Breast epithelium (tissue), 4 donors: ENCODE measurements at regions of chr2 and their contacts with region 1.

Region 1: DNA sequence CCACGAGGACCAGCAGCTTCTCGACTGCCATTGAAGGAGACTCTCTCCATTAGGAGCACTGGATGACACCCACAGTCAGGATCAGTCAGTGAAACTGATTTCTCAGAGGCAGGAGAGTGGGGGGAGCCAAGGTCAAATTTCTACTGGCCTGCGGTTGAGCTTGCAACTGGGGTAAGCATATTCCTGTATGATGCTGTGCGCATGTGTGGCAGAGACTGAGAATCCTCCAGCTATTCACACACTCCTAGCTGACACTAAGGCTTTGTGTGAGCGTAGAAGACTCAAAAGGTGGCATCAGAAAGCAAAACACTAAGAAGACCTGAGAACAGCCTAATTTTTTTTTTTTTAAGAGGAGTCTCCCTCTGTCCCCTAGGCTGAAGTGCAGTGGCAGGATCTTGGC is 19.8 kb upstream of the TTL start:
- DNase-seq: no peak
- H3K4me3 ChIP-seq: no peak overlapping the region
- H3K27ac ChIP-seq: no peak overlapping the region
- H3K4me1 ChIP-seq: no peaks in the 10 kb centered on the region
- H3K27me3 ChIP-seq: no peaks in the 10 kb centered on the region
- CTCF ChIP-seq: no peak
- POLR2A ChIP-seq: no peak

Region 2: DNA sequence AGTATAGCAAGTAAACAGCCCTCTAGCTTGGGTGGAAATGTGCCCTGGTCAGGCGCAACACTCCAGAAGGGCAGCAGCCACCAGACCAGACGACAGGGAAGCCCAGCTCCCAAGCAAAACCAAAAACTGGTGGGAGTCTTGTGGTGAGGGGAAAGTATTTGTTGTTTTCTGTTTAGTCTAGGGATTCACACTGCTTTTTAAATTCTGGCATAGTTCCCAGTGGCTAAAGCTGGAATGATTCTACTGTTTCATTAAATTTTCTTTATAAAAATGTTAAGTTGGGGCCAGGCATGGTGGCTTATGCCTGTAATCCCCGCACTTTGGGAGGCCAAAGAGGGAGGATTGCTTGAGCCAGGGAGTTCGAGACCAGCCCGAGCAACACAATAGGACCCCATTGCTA is 525.3 kb before region 1 on chr2:
- intact Hi-C with region 1: loop called (anchors 5 kb)
- DNase-seq: no peak
- H3K4me3 ChIP-seq: no peak overlapping the region
- H3K27ac ChIP-seq: no peak overlapping the region
- H3K4me1 ChIP-seq: no peaks in the 10 kb centered on the region
- H3K27me3 ChIP-seq: no peaks in the 10 kb centered on the region
- CTCF ChIP-seq: no peak
- POLR2A ChIP-seq: no peak

Region 3: DNA sequence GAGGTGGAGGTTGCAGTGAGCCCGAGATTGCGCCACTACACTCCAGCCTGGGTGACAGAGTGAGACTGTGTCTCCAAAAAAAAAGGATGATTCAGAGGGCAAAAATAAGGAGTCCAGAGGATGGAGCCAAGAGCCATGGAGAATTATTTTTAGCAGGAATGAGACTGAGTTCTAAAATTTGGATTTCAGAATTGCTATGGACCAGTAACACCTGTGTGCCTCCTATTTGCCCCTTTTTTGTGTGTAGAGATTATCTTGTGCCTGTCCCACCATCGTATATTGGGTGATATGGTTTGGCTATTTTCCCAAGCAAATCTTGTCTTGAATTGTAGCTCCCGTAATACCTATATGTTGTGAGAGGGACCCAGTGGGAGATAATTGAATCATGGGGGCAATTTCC is 12.3 kb before region 1 on chr2:
- intact Hi-C with region 1: no loop called
- DNase-seq: no peak
- H3K4me3 ChIP-seq: no peak overlapping the region
- H3K27ac ChIP-seq: no peak overlapping the region
- H3K4me1 ChIP-seq: no peaks in the 10 kb centered on the region
- H3K27me3 ChIP-seq: no peaks in the 10 kb centered on the region
- CTCF ChIP-seq: no peak
- POLR2A ChIP-seq: no peak

Region 4: DNA sequence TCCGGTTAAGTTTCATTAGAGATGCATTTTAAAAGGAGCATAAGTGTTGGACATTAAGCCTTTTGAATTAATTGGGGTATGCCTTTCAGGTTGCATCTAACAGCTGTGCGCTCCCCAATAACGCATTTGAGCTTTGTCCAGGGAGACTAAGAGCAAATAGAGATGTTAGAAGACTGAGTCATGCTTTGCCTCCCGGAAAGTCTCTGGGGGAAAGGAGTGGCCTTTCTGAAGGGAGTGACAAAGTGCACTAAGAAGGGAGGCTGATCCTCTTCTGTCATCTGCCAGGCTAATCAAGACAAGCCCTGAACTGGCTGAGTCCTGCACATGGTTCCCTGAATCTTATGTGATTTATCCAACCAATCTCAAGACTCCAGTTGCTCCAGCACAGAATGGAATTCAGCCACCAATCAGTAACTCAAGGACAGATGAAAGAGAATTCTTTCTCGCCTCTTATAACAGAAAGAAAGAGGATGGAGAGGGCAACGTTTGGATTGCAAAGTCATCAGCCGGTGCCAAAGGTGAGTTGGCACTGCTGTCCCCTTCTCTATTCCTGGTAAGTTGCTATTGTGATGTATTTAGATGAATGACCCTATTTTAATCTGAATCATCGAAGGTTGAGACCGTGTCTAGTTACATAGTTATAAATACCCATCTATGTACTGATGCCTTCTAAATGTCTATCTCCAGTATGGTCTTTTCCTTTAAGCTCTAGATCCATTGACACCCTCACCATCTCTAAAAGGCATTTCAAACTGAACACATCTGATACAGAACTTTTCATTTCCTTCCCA is 31.9 kb after region 1 on chr2:
- intact Hi-C with region 1: no loop called
- DNase-seq: no peak
- H3K4me3 ChIP-seq: no peak overlapping the region
- H3K27ac ChIP-seq: no peak overlapping the region
- H3K4me1 ChIP-seq: no peaks in the 10 kb centered on the region
- H3K27me3 ChIP-seq: no peaks in the 10 kb centered on the region
- CTCF ChIP-seq: no peak
- POLR2A ChIP-seq: no peak